ENCODE measurements at regions of chr11 and their contacts with region 1.

Region 1: GRCh38 chr11:68213555-68214174 is 569 bp upstream of the KMT5B start:
- DNase-seq: peak; percentile 85
- ATAC-seq: peak; percentile 46
- H3K4me3 Mint-ChIP-seq: peak overlapping the region; percentile 83
- H3K27ac Mint-ChIP-seq: peak overlapping the region; percentile 79
- H3K4me1 Mint-ChIP-seq: peaks cover 51% of the 10 kb centered on the region
- H3K27me3 Mint-ChIP-seq: no peaks in the 10 kb centered on the region
- CTCF ChIP-seq: no peak

Region 2: DNA sequence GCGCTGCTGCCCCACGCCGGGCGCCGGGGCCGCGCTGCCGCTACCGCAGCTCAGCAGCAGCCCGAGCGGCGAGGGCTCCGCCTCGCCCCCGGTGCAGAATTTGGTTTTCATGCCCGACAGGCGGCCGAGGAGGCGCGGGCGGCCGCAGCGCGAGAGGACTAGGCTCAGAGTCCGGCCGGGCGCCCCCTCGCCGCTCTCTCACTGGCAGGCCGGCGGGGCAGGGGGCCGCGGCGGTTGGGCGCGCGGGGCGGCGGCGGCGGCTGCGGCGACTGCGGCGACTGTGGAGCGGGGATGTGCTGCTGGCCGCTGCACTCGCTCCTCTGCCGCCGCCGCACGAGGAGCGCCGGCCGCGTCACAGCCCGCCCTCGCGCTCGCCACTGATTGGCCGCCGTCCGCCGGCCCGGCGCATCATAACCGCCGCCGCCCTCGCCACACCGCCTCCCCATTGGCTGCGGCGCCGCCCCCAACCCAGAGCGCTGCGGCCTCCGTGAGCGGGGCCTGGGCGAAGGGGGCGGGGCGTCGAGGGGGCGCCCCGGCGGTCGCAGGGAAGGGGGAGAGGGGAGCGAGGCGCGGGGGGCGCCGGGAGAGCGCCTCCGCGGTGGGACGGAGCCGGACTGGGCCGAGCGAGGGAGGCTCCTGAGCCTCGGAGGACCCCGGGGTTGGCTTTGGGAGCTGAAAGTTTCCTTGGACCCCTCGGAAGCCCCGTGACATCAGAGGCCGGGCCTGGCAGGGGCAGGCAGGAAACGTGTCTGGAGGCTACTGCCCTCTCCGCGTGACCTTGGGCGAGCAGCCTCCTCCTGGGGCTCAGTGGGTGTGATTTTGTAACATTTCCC is 92.4 kb before region 1 on chr11 and contains the start of gene CHKA:
- CTCF ChIA-PET with region 1: no interaction called
- POLR2A ChIA-PET with region 1: no interaction called
- intact Hi-C with region 1: loop called (anchors 2 kb)
- DNase-seq: peak; percentile 92
- ATAC-seq: peak; percentile 94
- H3K4me3 Mint-ChIP-seq: peak within 1 kb of the TSS; percentile 87
- H3K27ac Mint-ChIP-seq: peak within 1 kb of the TSS; percentile 87
- H3K4me1 Mint-ChIP-seq: peaks cover 29% of the 10 kb centered on the region
- H3K27me3 Mint-ChIP-seq: no peaks in the 10 kb centered on the region
- CTCF ChIP-seq: no peak
- total RNA-seq, gene CHKA: 11.9 and 16.1 TPM in 2 replicates

Region 3: GRCh38 chr11:68257475-68258362 is 44.1 kb after region 1 on chr11:
- CTCF ChIA-PET with region 1: interaction called, 21 read pairs
- POLR2A ChIA-PET with region 1: interaction called, 3 read pairs
- intact Hi-C with region 1: loop called (anchors 1 kb)
- DNase-seq: peak; percentile 90
- ATAC-seq: peak; percentile 94
- H3K4me3 Mint-ChIP-seq: peak overlapping the region; percentile 52
- H3K27ac Mint-ChIP-seq: peak overlapping the region; percentile 80
- H3K4me1 Mint-ChIP-seq: peaks cover 20% of the 10 kb centered on the region
- H3K27me3 Mint-ChIP-seq: no peaks in the 10 kb centered on the region
- CTCF ChIP-seq: no peak

Region 4: DNA sequence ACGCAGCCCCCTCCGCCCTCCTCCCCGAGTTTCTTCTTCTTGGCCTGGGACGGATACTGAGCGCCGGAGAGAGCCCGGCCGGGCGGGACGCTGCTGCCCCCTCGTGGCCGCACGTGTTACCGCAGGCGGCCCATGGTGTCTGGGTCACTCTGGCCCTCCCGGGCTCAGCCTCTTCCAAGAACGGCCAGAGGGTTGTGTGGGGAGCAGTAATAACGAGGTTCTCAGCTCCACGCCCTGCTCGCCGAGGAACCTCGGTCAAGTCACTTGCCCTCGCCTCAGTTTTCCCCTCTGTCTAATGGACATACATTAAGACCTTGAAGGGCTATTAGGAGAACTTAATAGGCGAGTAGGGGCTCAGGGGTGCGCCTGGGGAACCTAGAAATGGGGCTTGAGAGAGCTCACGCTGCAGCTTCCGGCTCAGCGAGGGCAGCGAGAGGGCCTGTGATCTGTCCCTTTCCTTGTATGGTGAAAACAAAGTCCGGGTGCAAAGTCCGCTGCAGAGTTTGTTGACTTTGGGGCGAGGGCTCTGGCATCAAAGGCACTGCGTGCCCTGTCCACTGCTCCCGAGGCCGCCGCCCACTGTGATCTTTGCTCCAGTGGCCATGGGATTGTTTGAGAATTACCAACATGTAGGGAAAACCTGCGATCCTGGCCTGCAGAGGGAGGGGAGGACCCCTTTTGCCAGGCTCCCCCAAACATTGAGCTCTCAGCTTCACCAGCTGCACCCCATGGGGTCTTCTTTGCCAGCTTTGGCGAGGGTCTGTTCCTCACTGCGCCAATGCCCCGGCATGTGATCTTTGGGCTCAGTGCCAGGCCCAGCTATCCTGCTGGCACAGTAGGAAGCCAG is 84.4 kb after region 1 on chr11:
- CTCF ChIA-PET with region 1: interaction called, 33 read pairs
- POLR2A ChIA-PET with region 1: interaction called, 3 read pairs
- intact Hi-C with region 1: loop called (anchors 1 kb)
- DNase-seq: peak; percentile 81
- ATAC-seq: peak; percentile 94
- H3K4me3 Mint-ChIP-seq: peak overlapping the region; percentile 50
- H3K27ac Mint-ChIP-seq: peak overlapping the region; percentile 53
- H3K4me1 Mint-ChIP-seq: peaks cover 40% of the 10 kb centered on the region
- H3K27me3 Mint-ChIP-seq: no peaks in the 10 kb centered on the region
- CTCF ChIP-seq: peak; percentile 83

Region 5: GRCh38 chr11:69055598-69056516 is 842.2 kb after region 1 on chr11:
- CTCF ChIA-PET with region 1: no interaction called
- POLR2A ChIA-PET with region 1: no interaction called
- intact Hi-C with region 1: no loop called
- DNase-seq: peak; percentile 78
- ATAC-seq: peak; percentile 87
- H3K4me3 Mint-ChIP-seq: peak overlapping the region; percentile 69
- H3K27ac Mint-ChIP-seq: peak overlapping the region; percentile 86
- H3K4me1 Mint-ChIP-seq: peaks cover 58% of the 10 kb centered on the region
- H3K27me3 Mint-ChIP-seq: no peaks in the 10 kb centered on the region
- CTCF ChIP-seq: no peak

Measured in activated B cell treated with CpG ODN at 0.5 μM for 24 hours (primary cell).